B cell (primary cell): ENCODE measurements at regions of chr9 and their contacts with region 1.

Region 1: GRCh38 chr9:80605129-80605528 is 1033.4 kb downstream of the TLE4 start:
- DNase-seq: no peak
- ATAC-seq: no peak
- H3K4me3 ChIP-seq: no peak overlapping the region
- H3K4me3 Mint-ChIP-seq: no peak overlapping the region
- H3K27ac ChIP-seq: no peak overlapping the region
- H3K27ac Mint-ChIP-seq: no peak overlapping the region
- H3K4me1 ChIP-seq: no peaks in the 10 kb centered on the region
- H3K4me1 Mint-ChIP-seq: no peaks in the 10 kb centered on the region
- H3K27me3 ChIP-seq: no peaks in the 10 kb centered on the region
- H3K27me3 Mint-ChIP-seq: no peaks in the 10 kb centered on the region
- CTCF ChIP-seq: no peak

Region 2: DNA sequence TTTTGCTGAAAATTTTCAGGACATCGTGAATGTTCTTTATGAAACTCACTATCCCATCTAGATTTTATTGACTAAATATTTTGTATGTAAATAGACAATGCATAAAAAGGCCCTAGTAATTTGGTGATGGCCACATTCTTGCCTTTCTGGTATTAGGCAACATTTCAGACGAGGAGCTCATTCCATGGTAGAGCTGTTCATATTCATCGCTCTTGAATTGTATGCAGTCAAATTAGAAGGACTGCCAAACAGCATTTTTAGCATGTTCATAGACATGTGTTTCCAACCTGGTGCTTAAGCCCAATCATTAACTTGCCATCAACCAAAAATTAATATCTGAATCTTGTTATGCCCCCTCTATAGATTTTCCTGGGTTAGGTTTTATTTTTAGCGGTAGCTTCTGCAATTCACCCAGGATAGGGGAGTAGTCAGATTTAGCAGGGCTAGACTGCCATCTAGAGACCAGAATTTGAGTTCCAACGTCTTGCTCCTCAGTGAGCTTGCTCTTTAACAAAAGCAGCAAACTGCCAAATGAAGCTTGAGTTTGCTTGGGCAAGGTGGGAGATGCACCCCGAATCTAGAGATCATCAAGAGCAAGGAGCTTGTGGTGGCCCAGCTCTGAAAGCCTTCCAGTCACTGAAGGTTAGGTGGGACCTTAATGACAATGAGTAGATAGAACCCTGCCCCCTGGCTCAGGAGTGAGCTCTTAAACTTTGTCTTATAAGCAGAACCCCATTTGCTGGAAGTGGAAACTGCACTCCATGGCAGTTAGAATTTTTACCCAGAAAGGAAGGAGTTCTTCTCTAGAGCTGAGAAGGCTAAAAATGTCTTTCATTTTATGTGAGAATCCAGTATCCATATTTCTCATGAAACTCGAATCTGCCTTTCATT is 2001.6 kb after region 1 on chr9:
- CTCF ChIA-PET with region 1: no interaction called
- POLR2A ChIA-PET with region 1: no interaction called
- intact Hi-C with region 1: loop called (anchors 5 kb)
- DNase-seq: peak; percentile 68
- ATAC-seq: peak; percentile 33
- H3K4me3 ChIP-seq: no peak overlapping the region
- H3K4me3 Mint-ChIP-seq: no peak overlapping the region
- H3K27ac ChIP-seq: no peak overlapping the region
- H3K27ac Mint-ChIP-seq: no peak overlapping the region
- H3K4me1 ChIP-seq: no peaks in the 10 kb centered on the region
- H3K4me1 Mint-ChIP-seq: no peaks in the 10 kb centered on the region
- H3K27me3 ChIP-seq: no peaks in the 10 kb centered on the region
- H3K27me3 Mint-ChIP-seq: no peaks in the 10 kb centered on the region
- CTCF ChIP-seq: peak; percentile 65